BJ (cell line): ENCODE measurements at regions of chr13 and their contacts with region 1.

Region 1: DNA sequence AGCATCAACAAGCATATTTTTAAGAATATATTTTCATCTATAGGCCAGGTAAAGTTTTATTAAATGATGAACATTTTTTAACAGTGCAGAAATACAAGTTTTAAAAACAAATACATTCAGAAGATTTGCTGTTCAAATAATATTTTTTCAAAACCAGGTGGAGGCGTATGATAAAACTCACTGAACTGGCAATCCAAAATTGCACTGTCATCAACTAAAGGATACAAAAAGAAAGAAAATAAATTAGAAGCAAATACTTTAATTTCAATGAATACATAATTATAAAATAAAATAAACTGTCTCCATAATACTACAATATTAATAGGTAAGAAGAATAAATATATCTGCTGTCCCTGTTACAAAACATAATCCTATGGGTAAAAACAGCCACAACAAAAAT is 21.2 kb downstream of the SPRYD7 start:
- DNase-seq: no peak
- H3K4me3 ChIP-seq: no peak overlapping the region
- H3K27me3 ChIP-seq: no peaks in the 10 kb centered on the region
- CTCF ChIP-seq: no peak

Region 2: GRCh38 chr13:49927755-49928154 is 12.8 kb after region 1 on chr13:
- CTCF ChIA-PET with region 1: interaction called, 13 read pairs
- POLR2A ChIA-PET with region 1: no interaction called
- DNase-seq: peak; percentile 61
- H3K4me3 ChIP-seq: no peak overlapping the region
- H3K27me3 ChIP-seq: no peaks in the 10 kb centered on the region
- CTCF ChIP-seq: no peak

Region 3: GRCh38 chr13:49954674-49955491 is 39.9 kb after region 1 on chr13:
- CTCF ChIA-PET with region 1: no interaction called
- POLR2A ChIA-PET with region 1: no interaction called
- DNase-seq: no peak
- H3K4me3 ChIP-seq: no peak overlapping the region
- H3K27me3 ChIP-seq: no peaks in the 10 kb centered on the region
- CTCF ChIP-seq: no peak